MCF 10A (cell line): ENCODE measurements at regions of chr4 and their contacts with region 1.

Region 1: GRCh38 chr4:186725469-186726425 is 2.1 kb upstream of the FAT1 start:
- DNase-seq: peak; percentile 83
- H3K4me3 Mint-ChIP-seq: peak overlapping the region; percentile 93
- H3K27ac Mint-ChIP-seq: peak overlapping the region; percentile 93
- H3K4me1 Mint-ChIP-seq: peaks cover 30% of the 10 kb centered on the region
- H3K27me3 Mint-ChIP-seq: no peaks in the 10 kb centered on the region
- CTCF ChIP-seq: peak; percentile 75

Region 2: GRCh38 chr4:186283311-186283710 is 442.4 kb before region 1 on chr4:
- CTCF ChIA-PET with region 1: no interaction called
- POLR2A ChIA-PET with region 1: no interaction called
- intact Hi-C with region 1: no loop called
- DNase-seq: no peak
- H3K4me3 Mint-ChIP-seq: no peak overlapping the region
- H3K27ac Mint-ChIP-seq: no peak overlapping the region
- H3K4me1 Mint-ChIP-seq: no peaks in the 10 kb centered on the region
- H3K27me3 Mint-ChIP-seq: no peaks in the 10 kb centered on the region
- CTCF ChIP-seq: no peak

Region 3: GRCh38 chr4:186297013-186297645 is 428.6 kb before region 1 on chr4:
- CTCF ChIA-PET with region 1: no interaction called
- POLR2A ChIA-PET with region 1: no interaction called
- intact Hi-C with region 1: loop called (anchors 5 kb)
- DNase-seq: peak; percentile 62
- H3K4me3 Mint-ChIP-seq: no peak overlapping the region
- H3K27ac Mint-ChIP-seq: no peak overlapping the region
- H3K4me1 Mint-ChIP-seq: no peaks in the 10 kb centered on the region
- H3K27me3 Mint-ChIP-seq: no peaks in the 10 kb centered on the region
- CTCF ChIP-seq: peak; percentile 68

Region 4: DNA sequence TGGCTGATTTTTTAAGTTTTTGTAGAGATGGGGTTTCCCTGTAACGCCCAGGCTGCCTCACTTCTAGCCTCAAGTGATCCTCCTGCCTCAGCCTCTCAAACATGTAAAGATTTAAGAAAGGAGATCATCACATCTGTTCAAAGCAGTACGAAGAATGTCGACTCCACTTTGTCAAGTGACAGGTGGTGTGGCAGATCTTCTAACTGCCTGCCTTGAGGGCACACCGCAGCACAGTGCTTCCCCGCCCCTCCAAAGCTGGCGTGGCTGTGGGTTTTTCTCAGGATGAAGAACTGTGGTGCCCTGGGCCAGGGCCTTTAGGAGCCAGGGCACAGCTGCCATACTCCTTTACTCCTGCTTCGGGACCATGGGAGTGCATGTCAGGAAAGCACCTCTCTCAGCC is 127.1 kb before region 1 on chr4:
- CTCF ChIA-PET with region 1: no interaction called
- POLR2A ChIA-PET with region 1: no interaction called
- intact Hi-C with region 1: no loop called
- DNase-seq: no peak
- H3K4me3 Mint-ChIP-seq: no peak overlapping the region
- H3K27ac Mint-ChIP-seq: no peak overlapping the region
- H3K4me1 Mint-ChIP-seq: no peaks in the 10 kb centered on the region
- H3K27me3 Mint-ChIP-seq: no peaks in the 10 kb centered on the region
- CTCF ChIP-seq: no peak

Region 5: DNA sequence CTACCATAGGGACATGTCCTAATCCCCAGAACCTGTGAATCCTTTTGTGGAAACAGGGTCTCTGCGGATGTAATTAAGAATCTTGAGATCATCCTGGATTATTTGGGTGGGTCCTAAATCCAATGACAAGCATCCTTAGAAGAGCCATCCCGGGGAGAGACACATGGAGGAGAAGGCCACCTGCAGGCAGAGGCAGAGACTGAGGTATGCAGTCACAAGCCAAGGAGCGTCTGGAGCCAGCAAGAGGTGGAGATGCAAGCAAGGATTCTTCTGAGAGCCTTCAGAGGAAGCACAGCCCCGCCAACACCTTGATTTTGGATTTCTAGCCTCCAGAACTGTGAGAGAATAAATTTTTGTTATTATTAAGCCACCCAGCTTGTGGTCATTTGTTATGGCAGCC is 11.7 kb after region 1 on chr4:
- CTCF ChIA-PET with region 1: interaction called, 4 read pairs
- POLR2A ChIA-PET with region 1: interaction called, 15 read pairs
- intact Hi-C with region 1: no loop called
- DNase-seq: no peak
- H3K4me3 Mint-ChIP-seq: no peak overlapping the region
- H3K27ac Mint-ChIP-seq: peak overlapping the region; percentile 83
- H3K4me1 Mint-ChIP-seq: peaks cover 17% of the 10 kb centered on the region
- H3K27me3 Mint-ChIP-seq: no peaks in the 10 kb centered on the region
- CTCF ChIP-seq: no peak

Region 6: GRCh38 chr4:186920483-186920882 is 194.7 kb after region 1 on chr4:
- CTCF ChIA-PET with region 1: no interaction called
- POLR2A ChIA-PET with region 1: interaction called, 10 read pairs
- intact Hi-C with region 1: loop called (anchors 5 kb)
- DNase-seq: peak; percentile 45
- H3K4me3 Mint-ChIP-seq: no peak overlapping the region
- H3K27ac Mint-ChIP-seq: peak overlapping the region; percentile 99
- H3K4me1 Mint-ChIP-seq: peaks cover 16% of the 10 kb centered on the region
- H3K27me3 Mint-ChIP-seq: no peaks in the 10 kb centered on the region
- CTCF ChIP-seq: no peak

Region 7: GRCh38 chr4:187059021-187059420 is 333.3 kb after region 1 on chr4:
- CTCF ChIA-PET with region 1: no interaction called
- POLR2A ChIA-PET with region 1: no interaction called
- intact Hi-C with region 1: no loop called
- DNase-seq: no peak
- H3K4me3 Mint-ChIP-seq: no peak overlapping the region
- H3K27ac Mint-ChIP-seq: no peak overlapping the region
- H3K4me1 Mint-ChIP-seq: no peaks in the 10 kb centered on the region
- H3K27me3 Mint-ChIP-seq: no peaks in the 10 kb centered on the region
- CTCF ChIP-seq: no peak

Region 8: GRCh38 chr4:187236209-187236890 is 510.6 kb after region 1 on chr4:
- CTCF ChIA-PET with region 1: interaction called, 3 read pairs
- POLR2A ChIA-PET with region 1: no interaction called
- intact Hi-C with region 1: loop called (anchors 5 kb)
- DNase-seq: peak; percentile 47
- H3K4me3 Mint-ChIP-seq: no peak overlapping the region
- H3K27ac Mint-ChIP-seq: no peak overlapping the region
- H3K4me1 Mint-ChIP-seq: peaks cover 10% of the 10 kb centered on the region
- H3K27me3 Mint-ChIP-seq: no peaks in the 10 kb centered on the region
- CTCF ChIP-seq: no peak

Region 9: DNA sequence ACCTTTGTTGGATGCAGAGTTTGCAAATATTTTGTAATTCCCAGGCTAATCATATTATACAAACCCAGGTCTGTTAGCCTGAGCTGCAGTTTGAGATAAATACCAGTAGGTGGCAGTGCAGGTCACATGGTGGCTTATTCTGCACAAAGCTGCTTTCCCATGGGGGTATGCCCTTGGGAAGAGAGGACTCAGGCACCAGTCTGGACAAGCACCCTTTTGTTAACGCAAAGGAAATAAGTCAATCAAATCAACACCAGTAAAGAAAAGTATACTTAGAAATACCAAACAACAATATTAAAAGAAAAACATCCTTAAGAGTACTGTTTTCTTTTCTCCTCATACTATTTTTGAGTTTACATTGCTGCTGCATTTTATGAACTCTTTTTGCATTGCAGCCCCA is 880.8 kb after region 1 on chr4:
- CTCF ChIA-PET with region 1: interaction called, 6 read pairs
- POLR2A ChIA-PET with region 1: interaction called, 6 read pairs
- intact Hi-C with region 1: loop called (anchors 2 kb)
- DNase-seq: peak; percentile 71
- H3K4me3 Mint-ChIP-seq: no peak overlapping the region
- H3K27ac Mint-ChIP-seq: no peak overlapping the region
- H3K4me1 Mint-ChIP-seq: peaks cover 25% of the 10 kb centered on the region
- H3K27me3 Mint-ChIP-seq: no peaks in the 10 kb centered on the region
- CTCF ChIP-seq: peak; percentile 90

Region 10: DNA sequence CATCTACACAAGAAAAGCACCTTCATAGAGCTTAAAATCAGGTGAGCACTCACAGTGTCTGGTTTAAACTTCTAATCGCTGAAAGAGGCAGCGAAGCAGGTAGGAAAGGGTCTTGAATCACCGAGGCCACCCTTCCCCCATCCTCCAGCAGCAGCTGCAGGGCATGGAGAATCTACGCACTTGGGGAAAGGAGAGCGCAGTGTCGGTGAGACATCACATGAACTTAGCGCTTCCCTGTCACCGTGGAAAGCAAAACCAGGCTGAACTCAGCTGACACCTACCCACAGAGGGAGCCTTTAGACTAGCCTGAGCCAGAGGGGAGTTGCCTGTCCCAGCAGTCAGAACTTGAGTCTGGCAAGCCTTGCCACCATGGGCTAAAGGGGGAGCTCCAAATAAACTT is 1072.6 kb after region 1 on chr4:
- CTCF ChIA-PET with region 1: no interaction called
- POLR2A ChIA-PET with region 1: no interaction called
- intact Hi-C with region 1: no loop called
- DNase-seq: no peak
- H3K4me3 Mint-ChIP-seq: no peak overlapping the region
- H3K27ac Mint-ChIP-seq: no peak overlapping the region
- H3K4me1 Mint-ChIP-seq: no peaks in the 10 kb centered on the region
- H3K27me3 Mint-ChIP-seq: no peaks in the 10 kb centered on the region
- CTCF ChIP-seq: no peak

Region 11: GRCh38 chr4:188262464-188262863 is 1536.7 kb after region 1 on chr4:
- CTCF ChIA-PET with region 1: no interaction called
- POLR2A ChIA-PET with region 1: no interaction called
- intact Hi-C with region 1: loop called (anchors 2 kb)
- DNase-seq: peak; percentile 69
- H3K4me3 Mint-ChIP-seq: no peak overlapping the region
- H3K27ac Mint-ChIP-seq: no peak overlapping the region
- H3K4me1 Mint-ChIP-seq: peaks cover 21% of the 10 kb centered on the region
- H3K27me3 Mint-ChIP-seq: no peaks in the 10 kb centered on the region
- CTCF ChIP-seq: no peak